CD4-positive, alpha-beta memory T cell (primary cell): ENCODE measurements at regions of chr1 and their contacts with region 1.

Region 1: DNA sequence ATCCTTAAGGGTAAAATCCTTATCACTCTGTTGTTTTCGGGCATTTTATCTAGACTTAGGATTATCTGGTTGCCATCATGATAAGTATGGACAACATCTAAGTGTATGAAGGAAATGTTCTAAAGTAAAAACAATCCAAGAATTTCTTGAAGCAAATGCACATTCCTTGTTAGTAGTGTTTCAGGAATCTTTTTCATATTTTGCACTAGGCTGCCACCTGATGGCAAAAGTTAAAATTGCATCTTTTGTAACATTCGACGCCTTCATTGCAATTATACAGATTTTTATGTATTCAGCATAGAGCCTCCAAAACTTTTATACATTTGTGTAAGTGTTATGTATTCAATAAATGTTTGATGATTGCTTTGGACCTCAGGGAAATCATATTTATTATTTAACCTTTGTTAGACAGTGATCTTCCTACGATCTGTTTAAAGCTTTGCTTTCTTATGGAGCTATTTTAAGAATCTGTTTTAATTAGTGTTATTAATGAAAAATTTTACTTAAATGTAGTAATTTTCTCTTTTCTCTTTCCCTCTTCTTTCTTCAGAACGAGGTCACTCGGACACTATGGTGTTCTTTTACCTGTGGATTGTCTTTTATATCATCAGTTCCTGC is 49.4 kb upstream of the KIAA1614 start:
- DNase-seq: peak in 4 of 5 donors; percentile 31 to 44 (median 38)
- H3K4me3 ChIP-seq: no peak overlapping the region
- H3K4me3 Mint-ChIP-seq: no peak overlapping the region
- H3K27ac ChIP-seq: no peak overlapping the region
- H3K27ac Mint-ChIP-seq: no peak overlapping the region
- H3K4me1 ChIP-seq: no peaks in the 10 kb centered on the region
- H3K4me1 Mint-ChIP-seq: peaks cover 0 to 4% (median 0%) of the 10 kb centered on the region in 4 donors
- H3K27me3 ChIP-seq: no peaks in the 10 kb centered on the region
- H3K27me3 Mint-ChIP-seq: no peaks in the 10 kb centered on the region

Region 2: GRCh38 chr1:180502360-180503273 is 360.6 kb before region 1 on chr1 and contains the start of gene ACBD6:
- CTCF ChIA-PET with region 1: interaction called, 14 read pairs
- POLR2A ChIA-PET with region 1: no interaction called
- intact Hi-C with region 1: no loop called
- DNase-seq: peak; percentile 86 to 91 (median 88)
- H3K4me3 ChIP-seq: peak within 1 kb of the TSS; percentile 89 to 95
- H3K4me3 Mint-ChIP-seq: peak within 1 kb of the TSS; percentile 96 to 99 (median 98)
- H3K27ac ChIP-seq: peak within 1 kb of the TSS; percentile 71
- H3K27ac Mint-ChIP-seq: peak within 1 kb of the TSS; percentile 92 to 99 (median 97)
- H3K4me1 ChIP-seq: peaks cover 42% of the 10 kb centered on the region
- H3K4me1 Mint-ChIP-seq: peaks cover 23 to 42% (median 31%) of the 10 kb centered on the region in 4 donors
- H3K27me3 ChIP-seq: no peaks in the 10 kb centered on the region
- H3K27me3 Mint-ChIP-seq: no peaks in the 10 kb centered on the region
- total RNA-seq, gene ACBD6: 55.1 to 64.2 TPM

Region 3: DNA sequence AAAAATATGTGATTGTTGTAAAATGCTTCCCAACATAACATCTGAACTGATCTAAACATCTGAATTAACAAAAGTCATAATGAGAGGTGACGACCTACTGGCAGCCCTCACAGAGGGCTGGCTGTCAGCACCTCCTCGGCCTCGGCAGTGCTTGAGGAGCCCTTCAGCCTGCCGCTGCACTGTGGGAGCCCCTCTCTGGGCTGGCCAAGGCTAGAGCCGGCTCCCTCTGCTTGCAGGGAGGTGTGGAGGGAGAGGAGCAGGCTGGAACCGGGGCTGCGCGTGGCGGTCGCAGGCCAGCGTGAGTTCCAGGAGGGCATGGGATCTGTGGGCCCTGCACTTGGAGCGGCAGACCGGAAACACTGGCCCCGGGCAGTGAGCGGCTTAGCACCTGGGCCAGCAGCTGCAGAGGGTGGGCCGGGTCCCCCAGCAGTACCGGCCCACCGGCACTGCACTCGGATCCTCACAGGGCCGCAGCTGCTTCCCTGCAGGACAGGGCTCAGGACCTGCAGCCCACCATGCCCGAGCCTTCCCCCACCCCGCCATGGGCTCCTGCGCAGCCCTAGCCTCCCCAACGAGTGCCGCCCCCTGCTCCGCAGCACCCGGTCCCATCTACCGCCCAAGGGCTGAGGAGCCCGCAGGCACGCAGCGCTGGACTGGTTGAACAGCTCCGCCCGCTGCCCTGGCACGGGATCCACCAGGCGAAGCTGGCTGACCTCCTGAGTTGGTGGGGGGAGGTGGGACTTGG is 354.7 kb before region 1 on chr1:
- CTCF ChIA-PET with region 1: interaction called, 181 read pairs
- POLR2A ChIA-PET with region 1: no interaction called
- intact Hi-C with region 1: no loop called
- DNase-seq: no peak
- H3K4me3 ChIP-seq: no peak overlapping the region
- H3K4me3 Mint-ChIP-seq: no peak overlapping the region
- H3K27ac ChIP-seq: no peak overlapping the region
- H3K27ac Mint-ChIP-seq: no peak overlapping the region
- H3K4me1 ChIP-seq: peaks cover 1% of the 10 kb centered on the region
- H3K4me1 Mint-ChIP-seq: peaks cover under 1 to 6% (median 1%) of the 10 kb centered on the region in 4 donors
- H3K27me3 ChIP-seq: no peaks in the 10 kb centered on the region
- H3K27me3 Mint-ChIP-seq: peaks cover 4% of the 10 kb centered on the region in 2 donors

Region 4: GRCh38 chr1:180515864-180516388 is 347.3 kb before region 1 on chr1:
- CTCF ChIA-PET with region 1: interaction called, 181 read pairs
- POLR2A ChIA-PET with region 1: no interaction called
- intact Hi-C with region 1: loop called (anchors 1 kb)
- DNase-seq: peak; percentile 48 to 62 (median 55)
- H3K4me3 ChIP-seq: no peak overlapping the region
- H3K4me3 Mint-ChIP-seq: no peak overlapping the region
- H3K27ac ChIP-seq: no peak overlapping the region
- H3K27ac Mint-ChIP-seq: no peak overlapping the region
- H3K4me1 ChIP-seq: peaks cover 3% of the 10 kb centered on the region
- H3K4me1 Mint-ChIP-seq: peaks cover 0 to 2% (median 1%) of the 10 kb centered on the region in 4 donors
- H3K27me3 ChIP-seq: no peaks in the 10 kb centered on the region
- H3K27me3 Mint-ChIP-seq: peaks cover 4% of the 10 kb centered on the region in 2 donors

Region 5: DNA sequence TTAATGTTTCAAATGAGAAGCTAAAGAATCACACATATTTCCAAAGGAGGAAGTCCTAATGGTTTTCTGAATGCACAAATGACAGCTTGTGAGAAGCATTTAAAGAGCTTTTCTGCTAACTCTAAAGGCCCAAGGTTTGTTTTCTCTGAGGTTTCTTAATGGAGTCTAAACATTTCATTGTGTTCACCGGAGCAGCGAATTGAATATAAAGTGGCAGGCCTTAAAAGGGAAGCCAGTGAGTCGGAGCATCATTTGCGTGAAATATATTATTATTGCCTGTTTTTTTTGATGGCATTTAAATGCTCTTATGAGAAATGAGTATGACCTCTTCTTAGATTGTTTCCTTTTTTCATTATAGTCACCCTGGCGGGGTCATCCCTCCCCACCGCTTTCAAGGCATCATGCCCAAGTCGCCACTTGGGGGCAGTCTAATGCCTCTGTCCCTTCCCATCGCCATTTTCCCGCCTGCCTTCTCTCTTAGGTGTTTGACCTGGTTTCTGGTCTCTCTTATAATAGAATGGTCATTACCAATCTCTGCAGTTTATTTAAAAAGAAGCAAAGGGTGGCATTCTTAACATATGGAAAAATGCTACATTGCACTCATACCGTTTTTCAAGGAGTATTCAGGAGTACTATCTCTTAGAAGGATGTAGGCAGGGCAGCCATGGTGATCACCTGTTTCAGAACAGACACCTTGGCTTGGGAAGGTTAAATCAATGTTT is 329.8 kb before region 1 on chr1:
- CTCF ChIA-PET with region 1: interaction called, 146 read pairs
- POLR2A ChIA-PET with region 1: no interaction called
- intact Hi-C with region 1: loop called (anchors 1 kb)
- DNase-seq: peak; percentile 40 to 58 (median 45)
- H3K4me3 ChIP-seq: no peak overlapping the region
- H3K4me3 Mint-ChIP-seq: peak overlapping the region in 1 of 8 donors; percentile 24
- H3K27ac ChIP-seq: no peak overlapping the region
- H3K27ac Mint-ChIP-seq: peak overlapping the region in 1 of 7 donors; percentile 20
- H3K4me1 ChIP-seq: no peaks in the 10 kb centered on the region
- H3K4me1 Mint-ChIP-seq: no peaks in the 10 kb centered on the region
- H3K27me3 ChIP-seq: no peaks in the 10 kb centered on the region
- H3K27me3 Mint-ChIP-seq: peaks cover 0 to 3% of the 10 kb centered on the region in 2 donors

Region 6: GRCh38 chr1:180842052-180842451 is 21.2 kb before region 1 on chr1:
- CTCF ChIA-PET with region 1: interaction called, 10 read pairs
- POLR2A ChIA-PET with region 1: no interaction called
- intact Hi-C with region 1: no loop called
- DNase-seq: no peak
- H3K4me3 ChIP-seq: no peak overlapping the region
- H3K4me3 Mint-ChIP-seq: no peak overlapping the region
- H3K27ac ChIP-seq: no peak overlapping the region
- H3K27ac Mint-ChIP-seq: peak overlapping the region in 1 of 7 donors; percentile 38
- H3K4me1 ChIP-seq: no peaks in the 10 kb centered on the region
- H3K4me1 Mint-ChIP-seq: peaks cover under 1 to 3% (median 1%) of the 10 kb centered on the region in 4 donors
- H3K27me3 ChIP-seq: no peaks in the 10 kb centered on the region
- H3K27me3 Mint-ChIP-seq: no peaks in the 10 kb centered on the region

Region 7: DNA sequence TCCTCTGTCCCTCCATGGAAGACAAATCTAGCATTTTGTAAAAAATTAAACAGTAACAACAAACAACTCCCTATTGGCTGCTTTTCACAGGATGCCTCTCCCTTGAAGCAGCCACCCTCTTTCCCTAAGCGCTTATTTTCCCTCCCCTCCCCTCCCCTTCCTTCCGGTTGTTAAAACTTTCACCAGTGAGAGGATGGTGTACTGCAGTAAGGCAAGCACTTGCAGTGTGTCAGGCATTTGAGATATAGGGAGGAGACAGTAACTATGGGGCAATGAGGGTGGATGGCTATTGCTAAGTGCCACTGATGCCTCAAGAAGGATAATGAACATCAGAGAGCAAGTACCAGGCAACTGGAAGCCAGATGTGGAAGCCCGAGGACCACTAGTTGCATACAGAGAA is 30.3 kb after region 1 on chr1:
- CTCF ChIA-PET with region 1: no interaction called
- POLR2A ChIA-PET with region 1: no interaction called
- intact Hi-C with region 1: no loop called
- DNase-seq: no peak
- H3K4me3 ChIP-seq: no peak overlapping the region
- H3K4me3 Mint-ChIP-seq: no peak overlapping the region
- H3K27ac ChIP-seq: no peak overlapping the region
- H3K27ac Mint-ChIP-seq: peak overlapping the region in 1 of 7 donors; percentile 53
- H3K4me1 ChIP-seq: peaks cover 3% of the 10 kb centered on the region
- H3K4me1 Mint-ChIP-seq: peaks cover 4% of the 10 kb centered on the region in 4 donors
- H3K27me3 ChIP-seq: no peaks in the 10 kb centered on the region
- H3K27me3 Mint-ChIP-seq: no peaks in the 10 kb centered on the region